MCF 10A (cell line): ENCODE measurements at regions of chr1 and their contacts with region 1.

Region 1: GRCh38 chr1:212455803-212456528 is 23.2 kb downstream of the NENF start:
- DNase-seq: peak; percentile 88
- H3K4me3 Mint-ChIP-seq: no peak overlapping the region
- H3K27ac Mint-ChIP-seq: no peak overlapping the region
- H3K4me1 Mint-ChIP-seq: no peaks in the 10 kb centered on the region
- H3K27me3 Mint-ChIP-seq: no peaks in the 10 kb centered on the region
- CTCF ChIP-seq: peak; percentile 100

Region 2: DNA sequence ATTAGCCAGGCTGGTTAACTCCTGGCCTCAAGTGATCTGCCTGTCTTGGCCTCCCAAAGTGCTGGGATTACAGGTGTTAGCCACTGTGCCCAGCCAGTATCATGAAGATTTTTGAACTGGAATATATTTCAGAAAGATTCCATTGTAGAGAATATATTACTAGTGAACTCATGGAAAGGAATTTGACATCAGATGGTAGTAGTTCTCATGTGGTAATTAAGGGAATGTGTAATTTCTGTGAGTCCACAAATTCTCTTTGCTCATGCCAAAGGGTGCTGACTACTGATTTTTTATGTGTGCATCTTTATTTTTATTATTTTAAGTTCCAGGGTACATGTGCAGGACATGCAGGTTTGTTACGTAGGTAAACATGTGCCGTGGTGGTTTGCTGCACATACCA is 410.0 kb before region 1 on chr1:
- CTCF ChIA-PET with region 1: interaction called, 116 read pairs
- POLR2A ChIA-PET with region 1: no interaction called
- intact Hi-C with region 1: no loop called
- DNase-seq: no peak
- H3K4me3 Mint-ChIP-seq: no peak overlapping the region
- H3K27ac Mint-ChIP-seq: no peak overlapping the region
- H3K4me1 Mint-ChIP-seq: peaks cover 23% of the 10 kb centered on the region
- H3K27me3 Mint-ChIP-seq: no peaks in the 10 kb centered on the region
- CTCF ChIP-seq: no peak

Region 3: GRCh38 chr1:212284744-212285684 is 171.0 kb before region 1 on chr1 and contains the start of gene PPP2R5A:
- CTCF ChIA-PET with region 1: interaction called, 50 read pairs
- POLR2A ChIA-PET with region 1: interaction called, 5 read pairs
- intact Hi-C with region 1: no loop called
- DNase-seq: peak; percentile 100
- H3K4me3 Mint-ChIP-seq: peak within 1 kb of the TSS; percentile 94
- H3K27ac Mint-ChIP-seq: peak within 1 kb of the TSS; percentile 99
- H3K4me1 Mint-ChIP-seq: peaks cover 29% of the 10 kb centered on the region
- H3K27me3 Mint-ChIP-seq: no peaks in the 10 kb centered on the region
- CTCF ChIP-seq: peak; percentile 20
- total RNA-seq, gene PPP2R5A: 37.5 and 38.6 TPM in 2 replicates

Region 4: GRCh38 chr1:212381397-212382035 is 74.5 kb before region 1 on chr1:
- CTCF ChIA-PET with region 1: interaction called, 113 read pairs
- POLR2A ChIA-PET with region 1: no interaction called
- intact Hi-C with region 1: no loop called
- DNase-seq: no peak
- H3K4me3 Mint-ChIP-seq: no peak overlapping the region
- H3K27ac Mint-ChIP-seq: no peak overlapping the region
- H3K4me1 Mint-ChIP-seq: no peaks in the 10 kb centered on the region
- H3K27me3 Mint-ChIP-seq: no peaks in the 10 kb centered on the region
- CTCF ChIP-seq: no peak

Region 5: DNA sequence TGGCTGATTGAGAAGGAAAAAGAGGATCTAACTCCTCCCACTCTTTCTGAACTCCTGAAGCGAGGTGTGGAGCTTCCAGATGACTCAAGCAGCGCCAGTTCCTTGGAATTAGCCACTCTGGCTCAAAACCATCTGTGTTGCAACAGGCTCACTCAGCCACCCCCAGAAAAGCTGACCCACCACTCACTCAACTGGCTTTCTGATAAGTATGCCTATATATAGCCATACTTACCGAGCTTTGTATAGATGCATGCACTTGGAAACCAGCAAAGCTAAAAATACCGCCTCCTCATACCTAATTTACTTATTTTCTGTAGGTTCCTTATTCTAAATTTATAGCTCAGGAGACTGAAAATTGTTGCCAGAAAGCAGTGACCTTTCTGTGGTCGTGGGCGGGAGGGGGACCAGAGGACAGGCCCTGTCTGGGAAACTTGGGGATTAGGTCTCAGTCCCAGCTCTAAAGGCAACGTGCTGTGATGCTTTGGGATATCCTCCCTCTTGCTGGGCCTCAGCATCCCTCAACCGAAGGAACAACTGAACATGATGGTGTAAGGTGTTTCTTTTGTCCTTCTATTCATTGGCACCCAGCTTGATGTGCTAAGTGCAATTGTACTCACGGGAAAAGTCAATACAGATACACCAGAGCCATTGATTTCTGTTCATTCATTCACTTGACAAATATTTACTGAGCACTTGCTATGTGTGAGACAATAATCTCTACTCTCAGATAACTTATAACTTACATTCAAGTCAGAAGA is 42.5 kb after region 1 on chr1:
- CTCF ChIA-PET with region 1: interaction called, 14 read pairs
- POLR2A ChIA-PET with region 1: no interaction called
- intact Hi-C with region 1: no loop called
- DNase-seq: peak; percentile 96
- H3K4me3 Mint-ChIP-seq: no peak overlapping the region
- H3K27ac Mint-ChIP-seq: no peak overlapping the region
- H3K4me1 Mint-ChIP-seq: peaks cover 15% of the 10 kb centered on the region
- H3K27me3 Mint-ChIP-seq: no peaks in the 10 kb centered on the region
- CTCF ChIP-seq: no peak

Region 6: DNA sequence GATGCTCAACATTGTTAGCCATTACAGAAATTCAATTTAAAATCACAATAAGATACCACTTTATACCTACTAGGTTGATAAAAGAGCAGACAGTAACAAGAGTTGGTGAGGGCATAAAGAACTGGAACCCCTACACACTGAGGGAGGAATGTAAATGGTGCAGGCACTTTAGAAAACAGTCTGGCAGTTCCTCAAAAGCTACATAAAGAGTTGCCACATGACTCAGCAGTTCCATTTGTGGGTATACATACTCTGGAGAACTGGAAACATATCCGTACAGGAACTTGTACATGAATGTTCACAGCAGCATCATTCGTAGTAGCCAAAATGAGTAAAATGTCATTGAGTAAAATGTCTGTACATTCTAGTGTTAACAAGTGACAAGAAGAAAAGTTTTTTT is 318.6 kb after region 1 on chr1:
- CTCF ChIA-PET with region 1: interaction called, 31 read pairs
- POLR2A ChIA-PET with region 1: interaction called, 3 read pairs
- intact Hi-C with region 1: no loop called
- DNase-seq: peak; percentile 57
- H3K4me3 Mint-ChIP-seq: no peak overlapping the region
- H3K27ac Mint-ChIP-seq: no peak overlapping the region
- H3K4me1 Mint-ChIP-seq: peaks cover 9% of the 10 kb centered on the region
- H3K27me3 Mint-ChIP-seq: no peaks in the 10 kb centered on the region
- CTCF ChIP-seq: no peak

Region 7: GRCh38 chr1:213989002-213989855 is 1533.3 kb after region 1 on chr1:
- CTCF ChIA-PET with region 1: no interaction called
- POLR2A ChIA-PET with region 1: no interaction called
- intact Hi-C with region 1: no loop called
- DNase-seq: no peak
- H3K4me3 Mint-ChIP-seq: peak overlapping the region; percentile 92
- H3K27ac Mint-ChIP-seq: no peak overlapping the region
- H3K4me1 Mint-ChIP-seq: peaks cover 15% of the 10 kb centered on the region
- H3K27me3 Mint-ChIP-seq: peaks cover 100% of the 10 kb centered on the region
- CTCF ChIP-seq: no peak